HCT116 (cell line): ENCODE measurements at regions of chr5 and their contacts with region 1.

Region 1: DNA sequence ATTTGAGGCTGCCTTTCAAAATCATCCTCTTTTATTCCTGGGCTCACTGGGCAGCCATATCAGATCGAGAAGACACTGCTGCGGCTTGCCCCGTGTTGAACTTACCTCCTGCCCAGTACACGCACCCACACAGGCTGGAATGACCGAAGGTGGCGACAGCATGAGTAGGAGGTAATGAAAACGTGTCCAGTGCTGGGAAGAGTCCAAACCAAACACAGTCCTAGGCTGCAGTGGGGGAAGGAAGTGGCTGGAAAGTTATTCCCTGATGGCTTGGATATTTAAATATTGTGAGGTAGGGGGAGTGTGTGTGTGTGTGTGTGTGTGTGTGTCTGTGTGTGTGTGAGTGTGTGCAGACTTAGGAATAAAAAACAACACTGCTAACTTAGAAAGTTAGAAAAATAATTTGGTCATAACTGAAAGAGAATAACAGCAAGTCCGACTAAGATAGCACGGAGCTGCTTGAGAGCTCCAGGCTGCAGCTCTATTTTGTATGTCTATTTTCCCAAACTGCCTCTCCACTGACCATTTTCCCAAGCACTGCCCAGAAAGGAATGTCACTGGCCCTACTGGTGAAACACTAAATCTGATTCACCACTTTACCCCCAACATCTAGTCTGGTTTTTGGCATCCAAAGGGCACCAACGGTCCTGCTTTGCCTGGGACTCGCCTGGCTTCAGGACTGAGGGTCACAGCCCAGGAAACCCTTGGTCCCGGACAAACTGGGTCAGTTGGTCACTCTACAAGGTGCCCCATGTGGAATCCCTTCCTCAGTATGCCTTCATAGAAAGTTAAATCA is 41.2 kb downstream of the ANKH start:
- DNase-seq: no peak
- ATAC-seq: no peak
- H3K4me3 ChIP-seq: no peak overlapping the region
- H3K27ac ChIP-seq: no peak overlapping the region
- H3K4me1 ChIP-seq: no peaks in the 10 kb centered on the region
- H3K27me3 ChIP-seq: no peaks in the 10 kb centered on the region
- CTCF ChIP-seq: no peak
- POLR2A ChIP-seq: no peak
- RAD21 ChIP-seq: no peak

Region 2: DNA sequence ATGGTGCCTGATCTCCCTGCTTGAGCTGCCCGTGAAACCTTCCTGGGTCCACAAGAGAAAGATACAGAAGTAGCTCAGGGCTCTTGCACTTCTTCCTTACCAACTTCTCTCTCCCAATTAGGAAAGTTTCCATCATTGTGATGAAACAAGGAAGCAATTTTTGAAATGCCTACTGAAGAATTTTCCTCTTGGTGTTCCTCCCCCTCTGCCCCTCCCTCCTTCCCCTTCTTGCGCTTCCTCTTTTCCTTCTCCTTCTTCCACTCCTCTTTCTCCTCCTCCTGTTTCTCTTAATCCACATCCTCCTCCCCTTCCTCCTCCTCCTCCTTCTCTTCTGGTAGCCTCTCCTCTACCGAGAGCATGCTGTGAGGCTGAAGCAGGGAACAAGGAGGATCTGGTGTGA is 285.1 kb before region 1 on chr5:
- CTCF ChIA-PET with region 1: no interaction called
- POLR2A ChIA-PET with region 1: no interaction called
- RAD21 ChIA-PET with region 1: no interaction called
- intact Hi-C with region 1: no loop called
- DNase-seq: no peak
- ATAC-seq: no peak
- H3K4me3 ChIP-seq: no peak overlapping the region
- H3K27ac ChIP-seq: no peak overlapping the region
- H3K4me1 ChIP-seq: no peaks in the 10 kb centered on the region
- H3K27me3 ChIP-seq: peaks cover 20% of the 10 kb centered on the region; the same call in 1 of the 2 replicates
- CTCF ChIP-seq: no peak
- POLR2A ChIP-seq: no peak
- RAD21 ChIP-seq: no peak

Region 3: GRCh38 chr5:14914603-14915277 is 84.3 kb after region 1 on chr5:
- CTCF ChIA-PET with region 1: no interaction called
- POLR2A ChIA-PET with region 1: no interaction called
- RAD21 ChIA-PET with region 1: no interaction called
- intact Hi-C with region 1: no loop called
- DNase-seq: no peak
- ATAC-seq: no peak
- H3K4me3 ChIP-seq: no peak overlapping the region
- H3K27ac ChIP-seq: no peak overlapping the region
- H3K4me1 ChIP-seq: no peaks in the 10 kb centered on the region
- H3K27me3 ChIP-seq: no peaks in the 10 kb centered on the region
- CTCF ChIP-seq: no peak
- POLR2A ChIP-seq: no peak
- RAD21 ChIP-seq: no peak

Region 4: GRCh38 chr5:15065091-15065490 is 234.7 kb after region 1 on chr5:
- CTCF ChIA-PET with region 1: no interaction called
- POLR2A ChIA-PET with region 1: no interaction called
- RAD21 ChIA-PET with region 1: no interaction called
- intact Hi-C with region 1: no loop called
- DNase-seq: no peak
- ATAC-seq: no peak
- H3K4me3 ChIP-seq: no peak overlapping the region
- H3K27ac ChIP-seq: no peak overlapping the region
- H3K4me1 ChIP-seq: no peaks in the 10 kb centered on the region
- H3K27me3 ChIP-seq: no peaks in the 10 kb centered on the region
- CTCF ChIP-seq: no peak
- POLR2A ChIP-seq: no peak
- RAD21 ChIP-seq: no peak

Region 5: DNA sequence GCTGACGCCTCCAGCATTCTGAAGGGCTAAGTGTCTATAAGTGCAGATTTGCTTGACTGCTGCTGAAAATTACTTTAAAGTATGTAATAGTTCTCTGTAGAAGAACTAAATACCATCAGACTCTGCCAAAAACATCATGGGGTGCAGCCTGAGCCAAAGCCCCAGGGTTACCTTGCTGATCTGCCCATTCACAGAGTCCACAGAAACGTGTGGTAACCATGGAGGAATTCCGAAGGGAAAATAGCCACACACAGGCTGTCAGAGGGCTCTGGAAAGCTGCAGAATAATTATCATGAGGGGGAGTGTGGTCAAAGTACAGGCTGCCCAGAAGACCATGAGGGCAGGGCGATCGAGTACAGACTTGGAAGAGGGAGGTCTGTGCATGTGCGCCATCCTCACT is 1750.0 kb after region 1 on chr5:
- CTCF ChIA-PET with region 1: no interaction called
- POLR2A ChIA-PET with region 1: no interaction called
- RAD21 ChIA-PET with region 1: no interaction called
- intact Hi-C with region 1: loop called (anchors 5 kb)
- DNase-seq: no peak
- ATAC-seq: no peak
- H3K4me3 ChIP-seq: no peak overlapping the region
- H3K27ac ChIP-seq: no peak overlapping the region
- H3K4me1 ChIP-seq: no peaks in the 10 kb centered on the region
- H3K27me3 ChIP-seq: no peaks in the 10 kb centered on the region
- CTCF ChIP-seq: no peak
- POLR2A ChIP-seq: no peak
- RAD21 ChIP-seq: no peak